Breast epithelium (tissue), 4 donors: ENCODE measurements at regions of chr7 and their contacts with region 1.

Region 1: GRCh38 chr7:40374575-40374974 is 239.8 kb downstream of the SUGCT start:
- DNase-seq: no peak
- H3K4me3 ChIP-seq: no peak overlapping the region
- H3K27ac ChIP-seq: no peak overlapping the region
- H3K4me1 ChIP-seq: no peaks in the 10 kb centered on the region
- H3K27me3 ChIP-seq: no peaks in the 10 kb centered on the region
- CTCF ChIP-seq: no peak
- POLR2A ChIP-seq: no peak

Region 2: GRCh38 chr7:40346554-40346953 is 28.0 kb before region 1 on chr7:
- intact Hi-C with region 1: no loop called
- DNase-seq: no peak
- H3K4me3 ChIP-seq: no peak overlapping the region
- H3K27ac ChIP-seq: no peak overlapping the region
- H3K4me1 ChIP-seq: no peaks in the 10 kb centered on the region
- H3K27me3 ChIP-seq: no peaks in the 10 kb centered on the region
- CTCF ChIP-seq: no peak
- POLR2A ChIP-seq: no peak

Region 3: DNA sequence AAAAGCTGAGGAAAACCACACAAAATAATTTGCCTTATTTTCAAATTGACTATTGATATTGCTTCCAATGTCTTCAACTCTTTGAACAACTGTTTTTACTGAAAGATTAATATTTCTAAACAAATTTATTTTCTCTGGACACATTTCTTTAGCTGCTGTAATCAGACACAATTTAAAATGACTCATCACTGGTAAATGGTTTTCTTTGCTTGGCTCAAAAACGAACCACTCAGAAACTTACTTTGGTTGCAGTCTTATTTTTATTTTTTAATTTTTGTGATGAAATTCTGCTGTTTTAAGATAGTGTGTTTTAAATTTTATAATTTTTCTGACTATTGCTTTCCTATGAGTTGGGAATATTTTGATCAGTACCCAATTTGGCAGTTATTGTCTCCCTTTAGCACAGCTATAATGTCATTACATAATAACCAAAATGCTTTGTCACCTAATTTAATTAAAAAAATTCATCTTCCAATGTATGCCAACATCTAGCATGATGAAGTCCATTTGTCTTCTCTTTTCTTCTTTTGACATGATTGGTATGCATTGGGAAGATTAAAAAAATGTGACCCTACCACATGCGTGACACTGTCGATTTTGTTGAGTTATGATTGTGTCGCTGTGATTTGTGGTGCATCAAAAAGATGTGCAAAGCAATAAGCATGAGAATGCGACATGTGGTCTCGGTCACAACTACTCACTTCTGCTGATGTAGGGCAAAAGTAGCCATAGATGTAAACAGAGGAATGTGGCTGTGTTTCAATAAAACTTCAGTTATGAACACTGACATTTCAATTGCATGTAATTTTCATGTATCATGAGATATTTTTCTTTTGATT is 17.5 kb before region 1 on chr7:
- intact Hi-C with region 1: loop called (anchors 2 kb)
- DNase-seq: no peak
- H3K4me3 ChIP-seq: no peak overlapping the region
- H3K27ac ChIP-seq: no peak overlapping the region
- H3K4me1 ChIP-seq: no peaks in the 10 kb centered on the region
- H3K27me3 ChIP-seq: no peaks in the 10 kb centered on the region
- CTCF ChIP-seq: no peak
- POLR2A ChIP-seq: no peak

Region 4: DNA sequence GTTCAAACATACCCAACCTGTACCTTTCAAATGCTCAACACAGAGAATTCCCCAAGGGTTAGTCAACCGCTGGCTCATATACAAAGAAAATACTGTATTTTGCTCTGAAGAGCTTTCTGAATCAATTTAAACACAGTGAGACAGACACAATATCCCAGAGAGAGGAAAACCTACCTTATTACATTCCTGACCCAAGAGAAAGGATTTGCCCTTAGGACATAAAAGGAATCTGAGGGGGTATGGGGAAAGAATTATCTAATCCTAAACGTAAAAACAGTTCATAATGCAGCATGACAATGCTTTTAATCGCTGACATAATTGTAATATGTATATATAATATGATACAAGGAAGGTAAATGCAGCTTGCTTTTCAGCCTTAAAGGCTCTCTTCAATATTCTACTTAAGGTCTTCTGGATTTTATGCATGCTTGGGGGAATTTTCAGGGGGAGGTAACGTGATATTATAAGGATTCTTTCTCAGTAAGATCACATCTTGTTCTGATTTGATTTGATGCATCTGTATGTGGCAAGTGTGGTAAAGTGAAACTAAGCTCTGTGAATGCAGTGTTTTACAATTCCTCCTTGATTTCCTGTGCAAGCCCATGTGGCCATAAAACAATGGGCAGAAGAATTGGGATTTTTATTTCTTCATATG is 1621.9 kb after region 1 on chr7:
- intact Hi-C with region 1: no loop called
- DNase-seq: no peak
- H3K4me3 ChIP-seq: no peak overlapping the region
- H3K27ac ChIP-seq: peak overlapping the region in 1 of 2 donors; percentile 10
- H3K4me1 ChIP-seq: peaks cover 0 to 5% of the 10 kb centered on the region in 2 donors
- H3K27me3 ChIP-seq: no peaks in the 10 kb centered on the region
- CTCF ChIP-seq: no peak
- POLR2A ChIP-seq: no peak